CD14-positive monocyte (primary cell): ENCODE measurements at regions of chr2 and their contacts with region 1.

Region 1: DNA sequence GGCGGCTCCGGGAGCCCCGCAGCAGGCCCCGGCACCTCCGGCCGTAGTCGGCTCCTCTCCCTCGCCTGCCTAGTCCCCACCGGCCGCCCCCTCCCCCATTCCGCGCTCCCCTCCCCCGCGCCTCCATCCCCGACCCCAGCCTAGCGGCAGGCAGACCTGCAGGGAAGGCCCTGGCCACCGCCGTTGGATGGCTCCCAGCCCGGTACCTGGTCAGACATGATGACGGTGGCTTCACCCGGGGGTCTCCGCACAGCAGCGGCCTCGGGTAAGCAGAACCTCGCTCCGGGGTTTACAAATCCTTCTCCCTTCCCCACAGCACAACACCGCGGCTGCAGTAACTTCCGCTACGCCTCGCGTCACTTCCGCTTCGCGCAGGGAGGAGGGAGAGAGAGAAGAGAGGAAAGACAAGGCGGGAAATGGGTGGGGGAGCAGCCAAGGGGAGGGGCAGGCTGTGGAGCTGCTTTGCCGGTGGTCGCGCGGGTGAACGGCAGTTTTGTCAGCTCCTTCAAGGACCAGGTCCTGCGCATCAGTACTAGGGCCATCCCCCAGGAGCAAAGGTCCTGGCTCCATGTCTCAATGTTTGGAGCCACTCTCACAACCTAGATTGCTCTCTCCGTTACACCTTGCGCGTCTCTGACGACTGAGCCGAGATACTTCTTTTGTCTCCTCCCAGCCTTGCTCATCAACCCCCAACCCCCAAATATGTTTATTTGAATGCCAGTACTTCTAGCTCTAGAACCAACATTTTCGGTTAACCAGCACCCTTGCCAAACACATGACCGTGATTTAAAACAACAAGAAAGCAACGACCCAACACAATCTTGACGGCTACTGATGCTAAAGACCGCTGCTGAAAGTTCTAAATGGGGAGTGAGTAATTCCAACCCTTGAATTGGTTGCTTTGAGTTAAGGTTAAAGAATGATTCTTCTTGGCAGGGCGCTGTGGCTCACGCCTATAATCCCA is at the start of gene SUMO1:
- DNase-seq: peak; percentile 84 to 88 (median 88)
- H3K4me3 ChIP-seq: peak within 1 kb of the TSS; percentile 76 to 97 (median 93)
- H3K4me3 Mint-ChIP-seq: peak within 1 kb of the TSS; percentile 97 to 98
- H3K27ac ChIP-seq: peak within 1 kb of the TSS; percentile 59 to 91
- H3K27ac Mint-ChIP-seq: peak within 1 kb of the TSS; percentile 85 to 97 (median 92)
- H3K4me1 ChIP-seq: peaks cover 17 to 20% of the 10 kb centered on the region in 2 donors
- H3K4me1 Mint-ChIP-seq: peaks cover 24% of the 10 kb centered on the region
- H3K27me3 ChIP-seq: no peaks in the 10 kb centered on the region
- H3K27me3 Mint-ChIP-seq: peaks cover 3% of the 10 kb centered on the region in 3 donors
- CTCF ChIP-seq: no peak
- polyA plus RNA-seq, gene SUMO1: 30.4 to 159 (median 156) TPM

Region 2: DNA sequence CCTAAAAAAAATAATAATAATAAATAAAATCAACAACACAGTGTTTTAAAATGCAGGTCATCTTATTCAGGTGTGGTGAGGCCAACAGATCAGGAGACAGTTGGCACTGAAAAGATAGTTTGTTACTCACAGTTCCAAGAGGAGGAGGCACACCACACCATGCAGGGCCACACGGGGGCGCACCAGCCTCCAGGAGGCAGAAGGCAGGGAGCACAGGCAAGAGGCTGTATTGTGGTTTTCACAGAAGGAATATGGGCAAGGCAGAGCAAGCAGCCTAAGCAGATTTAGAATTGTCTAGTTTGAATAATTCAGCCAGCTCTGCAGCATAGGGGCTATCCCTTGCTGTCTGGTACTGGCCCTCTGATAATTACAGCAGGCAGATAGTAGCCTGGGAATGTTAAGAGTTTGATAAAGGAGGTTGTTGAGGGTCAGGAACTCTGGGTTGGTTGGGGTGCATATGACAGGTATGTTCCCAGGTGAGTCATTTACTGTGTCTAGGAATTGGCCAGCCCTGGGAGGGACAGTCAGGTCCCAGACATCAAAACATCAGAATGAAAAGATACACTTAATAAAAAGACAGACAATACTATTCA is 134.1 kb before region 1 on chr2:
- intact Hi-C with region 1: no loop called
- DNase-seq: peak; percentile 17 to 27 (median 18)
- H3K4me3 ChIP-seq: no peak overlapping the region
- H3K4me3 Mint-ChIP-seq: no peak overlapping the region
- H3K27ac ChIP-seq: no peak overlapping the region
- H3K27ac Mint-ChIP-seq: no peak overlapping the region
- H3K4me1 ChIP-seq: no peaks in the 10 kb centered on the region
- H3K4me1 Mint-ChIP-seq: peaks cover 2% of the 10 kb centered on the region
- H3K27me3 ChIP-seq: no peaks in the 10 kb centered on the region
- H3K27me3 Mint-ChIP-seq: peaks cover 2 to 5% (median 4%) of the 10 kb centered on the region in 3 donors
- CTCF ChIP-seq: peak; percentile 72

Region 3: DNA sequence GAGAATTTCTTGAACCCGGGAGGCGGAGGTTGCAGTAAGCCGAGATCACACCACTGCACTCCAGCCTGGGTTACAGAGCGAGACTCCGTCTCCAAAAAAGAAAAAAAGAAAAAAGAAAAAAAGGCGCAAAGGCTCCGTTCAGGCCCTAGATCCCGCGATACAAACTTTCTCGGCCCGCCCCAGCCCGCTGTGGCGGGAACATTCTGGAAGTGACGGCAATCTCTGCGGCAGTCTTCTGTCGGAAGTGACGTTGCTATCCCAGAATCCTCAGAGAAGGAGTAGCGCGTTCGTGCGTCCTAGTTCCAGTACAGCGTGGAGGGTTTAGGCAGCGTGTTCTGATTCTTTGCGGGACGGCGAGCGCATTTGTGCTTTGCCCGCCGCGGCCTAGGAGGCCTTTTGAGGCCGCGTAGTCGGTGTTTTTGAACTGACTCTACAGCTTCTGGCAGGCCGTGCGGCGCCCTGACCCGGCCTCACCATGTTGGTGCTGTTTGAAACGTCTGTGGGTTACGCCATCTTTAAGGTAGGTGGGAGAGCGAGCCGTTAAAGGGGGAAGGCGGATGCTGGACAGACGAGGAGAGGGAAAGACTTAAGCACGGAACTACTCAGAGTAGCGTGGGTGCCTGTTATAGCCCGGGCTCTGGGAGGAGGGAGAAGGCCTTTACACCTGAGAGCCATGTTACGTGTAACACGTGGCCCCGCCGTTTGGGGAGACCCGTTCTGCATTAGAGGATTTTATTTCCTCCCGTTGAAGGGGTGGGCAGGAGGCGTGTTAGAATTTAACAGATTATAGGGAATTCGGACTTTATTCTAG is 27.2 kb after region 1 on chr2 and contains the start of gene NOP58:
- intact Hi-C with region 1: loop called in 1 of 2 experiments (anchors 1 kb)
- DNase-seq: peak; percentile 89 to 92 (median 89)
- H3K4me3 ChIP-seq: peak within 1 kb of the TSS; percentile 85 to 97 (median 95)
- H3K4me3 Mint-ChIP-seq: peak within 1 kb of the TSS; percentile 45 to 51
- H3K27ac ChIP-seq: peak within 1 kb of the TSS; percentile 93 to 95
- H3K27ac Mint-ChIP-seq: peak within 1 kb of the TSS in 4 of 7 donors; percentile 42 to 76 (median 48)
- H3K4me1 ChIP-seq: peaks cover 11 to 31% of the 10 kb centered on the region in 2 donors
- H3K4me1 Mint-ChIP-seq: peaks cover 13% of the 10 kb centered on the region
- H3K27me3 ChIP-seq: no peaks in the 10 kb centered on the region
- H3K27me3 Mint-ChIP-seq: peaks cover 0 to 3% (median 2%) of the 10 kb centered on the region in 3 donors
- CTCF ChIP-seq: no peak
- polyA plus RNA-seq, gene NOP58: 19.4 to 25.4 (median 22.5) TPM